ENCODE measurements at regions of chr10 and their contacts with region 1.

Region 1: GRCh38 chr10:13536674-13537366 is 8.0 kb upstream of the BEND7 start:
- DNase-seq: peak; percentile 66 to 86
- H3K4me3 ChIP-seq: peak overlapping the region in 1 of 4 experiments; percentile 25; a peak in 3 of 8 replicates
- H3K27ac ChIP-seq: no peak overlapping the region
- H3K4me1 ChIP-seq: no peaks in the 10 kb centered on the region; a peak in 1 of 7 replicates
- H3K27me3 ChIP-seq: no peaks in the 10 kb centered on the region
- CTCF ChIP-seq: peak; percentile 80 to 94 (median 91)
- EP300 ChIP-seq: no peak
- POLR2A ChIP-seq: no peak
- RAD21 ChIP-seq: peak; percentile 85 to 89

Region 2: DNA sequence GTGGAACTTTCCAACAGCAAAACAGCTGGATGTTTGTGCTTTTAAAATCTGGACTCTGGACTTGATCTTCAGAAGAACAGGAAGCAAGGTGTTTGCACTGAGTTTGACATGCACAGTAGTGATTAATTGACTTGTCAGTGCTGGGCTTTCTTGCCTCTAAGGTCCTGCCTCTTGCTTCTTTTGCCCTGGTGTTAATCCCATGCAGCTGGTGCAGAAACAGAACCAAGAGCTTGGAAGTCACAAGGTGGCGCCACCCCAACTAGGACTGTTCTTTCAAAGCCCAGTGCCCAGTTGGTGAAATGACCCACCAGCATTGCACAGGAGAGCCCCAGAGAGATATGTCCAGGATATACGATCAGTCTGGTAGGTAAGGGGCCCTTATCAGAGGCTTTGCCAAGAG is 121.9 kb before region 1 on chr10:
- CTCF ChIA-PET with region 1: interaction called, 25 read pairs
- POLR2A ChIA-PET with region 1: no interaction called
- DNase-seq: peak in 1 of 2 experiments; percentile 77
- H3K4me3 ChIP-seq: no peak overlapping the region
- H3K27ac ChIP-seq: no peak overlapping the region
- H3K4me1 ChIP-seq: no peaks in the 10 kb centered on the region
- H3K27me3 ChIP-seq: no peaks in the 10 kb centered on the region; a peak in 1 of 7 replicates
- CTCF ChIP-seq: peak; percentile 68 to 79 (median 75)
- EP300 ChIP-seq: no peak
- POLR2A ChIP-seq: no peak
- RAD21 ChIP-seq: peak; percentile 56 to 74

Region 3: DNA sequence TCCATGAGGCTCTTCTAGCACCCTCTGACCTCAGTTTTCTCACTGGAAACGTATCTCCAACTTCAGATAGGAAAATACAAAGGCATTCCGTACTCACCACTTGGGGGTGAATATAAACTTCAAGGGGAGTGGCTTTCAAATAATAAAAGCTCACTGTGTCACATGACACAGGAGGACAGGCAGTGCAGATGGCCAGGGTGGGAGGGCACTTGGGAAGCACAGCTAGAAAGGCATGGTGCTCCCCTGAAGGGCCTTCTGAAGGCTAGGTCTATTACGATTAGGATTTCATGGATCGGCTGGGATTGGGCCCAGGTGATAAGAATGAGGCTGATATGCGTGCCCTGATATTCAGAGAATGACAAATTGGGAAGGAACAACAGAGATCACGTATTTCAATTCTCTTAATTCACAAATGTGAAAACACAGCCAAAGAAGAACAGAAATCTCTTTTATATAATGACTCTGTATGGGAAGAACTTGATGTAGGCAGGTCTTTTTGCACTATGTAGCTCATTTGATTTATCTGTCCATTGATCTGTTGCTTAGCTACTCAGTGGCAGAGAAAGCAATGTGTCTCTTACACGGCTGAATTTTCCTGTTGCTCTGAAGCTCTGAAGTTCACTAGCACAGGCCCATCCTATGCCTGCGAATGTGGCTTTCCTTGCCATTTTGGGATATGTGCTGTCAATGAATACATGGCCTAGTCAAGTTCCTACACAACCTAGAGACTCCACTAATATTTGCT is 91.0 kb before region 1 on chr10:
- CTCF ChIA-PET with region 1: interaction called, 22 read pairs
- POLR2A ChIA-PET with region 1: no interaction called
- DNase-seq: peak in 1 of 2 experiments; percentile 28
- H3K4me3 ChIP-seq: no peak overlapping the region
- H3K27ac ChIP-seq: no peak overlapping the region
- H3K4me1 ChIP-seq: peaks cover 0 to 5% (median 0%) of the 10 kb centered on the region in 4 experiments; a peak in 1 of 7 replicates
- H3K27me3 ChIP-seq: no peaks in the 10 kb centered on the region
- CTCF ChIP-seq: no peak
- EP300 ChIP-seq: no peak
- POLR2A ChIP-seq: no peak
- RAD21 ChIP-seq: no peak

Region 4: GRCh38 chr10:13518076-13518692 is 18.6 kb before region 1 on chr10:
- CTCF ChIA-PET with region 1: interaction called, 21 read pairs
- POLR2A ChIA-PET with region 1: no interaction called
- DNase-seq: peak in 1 of 2 experiments; percentile 76
- H3K4me3 ChIP-seq: no peak overlapping the region
- H3K27ac ChIP-seq: no peak overlapping the region
- H3K4me1 ChIP-seq: peaks cover 0 to 3% (median 0%) of the 10 kb centered on the region in 4 experiments; a peak in 1 of 7 replicates
- H3K27me3 ChIP-seq: no peaks in the 10 kb centered on the region
- CTCF ChIP-seq: peak; percentile 77 to 83 (median 81)
- EP300 ChIP-seq: no peak
- POLR2A ChIP-seq: no peak
- RAD21 ChIP-seq: peak; percentile 85 to 89

Region 5: DNA sequence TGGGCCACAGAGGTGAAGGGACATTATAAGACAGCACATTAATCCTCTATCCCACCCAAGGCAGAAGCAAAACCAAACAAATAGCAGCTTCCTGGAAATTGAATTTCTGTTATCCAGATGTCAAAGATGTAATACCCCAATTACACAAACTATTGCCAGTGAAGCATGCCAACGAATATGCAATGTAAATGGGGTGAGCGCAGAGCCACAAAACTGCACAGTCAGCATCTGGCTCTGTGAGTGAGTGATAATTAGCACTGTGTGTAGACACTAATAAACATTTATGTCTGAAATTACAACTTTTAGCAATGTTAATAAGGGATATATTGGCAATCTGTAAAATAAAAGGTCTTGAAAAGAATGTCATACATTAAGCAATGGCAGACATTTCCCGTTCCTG is 11.2 kb before region 1 on chr10:
- CTCF ChIA-PET with region 1: interaction called, 21 read pairs
- POLR2A ChIA-PET with region 1: no interaction called
- DNase-seq: no peak
- H3K4me3 ChIP-seq: no peak overlapping the region
- H3K27ac ChIP-seq: no peak overlapping the region
- H3K4me1 ChIP-seq: peaks cover 0 to 6% (median 2%) of the 10 kb centered on the region in 4 experiments; a peak in 3 of 7 replicates
- H3K27me3 ChIP-seq: peaks cover 7 to 32% (median 24%) of the 10 kb centered on the region in 4 experiments
- CTCF ChIP-seq: no peak
- EP300 ChIP-seq: no peak
- POLR2A ChIP-seq: no peak
- RAD21 ChIP-seq: no peak

Region 6: GRCh38 chr10:13593535-13593934 is 56.7 kb after region 1 on chr10:
- CTCF ChIA-PET with region 1: no interaction called
- POLR2A ChIA-PET with region 1: no interaction called
- DNase-seq: no peak
- H3K4me3 ChIP-seq: no peak overlapping the region
- H3K27ac ChIP-seq: no peak overlapping the region
- H3K4me1 ChIP-seq: no peaks in the 10 kb centered on the region
- H3K27me3 ChIP-seq: no peaks in the 10 kb centered on the region
- CTCF ChIP-seq: no peak
- EP300 ChIP-seq: no peak
- POLR2A ChIP-seq: no peak
- RAD21 ChIP-seq: no peak